ENCODE measurements at regions of chr15 and their contacts with region 1.

Region 1: DNA sequence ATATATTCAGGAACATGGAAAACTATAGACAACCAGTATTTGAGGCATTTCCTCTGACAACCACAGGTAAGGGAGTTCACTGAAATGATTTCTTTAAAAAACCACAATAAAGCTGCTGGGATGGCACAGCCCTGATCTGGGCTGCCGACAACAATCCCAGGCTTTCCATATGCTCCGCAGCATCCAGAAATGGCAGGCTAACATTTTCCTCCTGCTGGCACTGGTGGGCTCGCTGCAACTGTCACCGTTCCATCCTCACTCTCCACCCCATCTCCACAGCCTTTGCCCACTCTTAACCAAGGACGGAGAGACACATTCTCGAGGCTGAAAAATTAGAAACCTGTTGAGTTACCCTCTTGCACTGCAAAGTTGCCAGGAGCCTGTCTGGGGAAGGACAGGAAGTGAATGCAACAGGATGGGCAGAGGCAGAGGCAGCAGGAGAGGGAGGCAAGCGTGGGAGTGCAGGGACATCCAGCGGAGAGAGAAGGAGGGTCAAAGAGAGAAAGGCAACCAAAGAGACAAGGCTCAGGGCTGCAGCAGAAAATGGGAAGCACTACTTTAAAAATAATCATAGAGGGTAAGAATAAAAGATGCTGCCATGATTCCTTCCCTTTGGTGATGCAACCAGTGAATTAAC is 79.0 kb upstream of the ARRDC4 start:
- DNase-seq: no peak
- ATAC-seq: no peak
- H3K4me3 ChIP-seq: no peak overlapping the region
- H3K27ac ChIP-seq: no peak overlapping the region
- H3K4me1 ChIP-seq: no peaks in the 10 kb centered on the region
- H3K27me3 ChIP-seq: no peaks in the 10 kb centered on the region
- CTCF ChIP-seq: no peak

Region 2: DNA sequence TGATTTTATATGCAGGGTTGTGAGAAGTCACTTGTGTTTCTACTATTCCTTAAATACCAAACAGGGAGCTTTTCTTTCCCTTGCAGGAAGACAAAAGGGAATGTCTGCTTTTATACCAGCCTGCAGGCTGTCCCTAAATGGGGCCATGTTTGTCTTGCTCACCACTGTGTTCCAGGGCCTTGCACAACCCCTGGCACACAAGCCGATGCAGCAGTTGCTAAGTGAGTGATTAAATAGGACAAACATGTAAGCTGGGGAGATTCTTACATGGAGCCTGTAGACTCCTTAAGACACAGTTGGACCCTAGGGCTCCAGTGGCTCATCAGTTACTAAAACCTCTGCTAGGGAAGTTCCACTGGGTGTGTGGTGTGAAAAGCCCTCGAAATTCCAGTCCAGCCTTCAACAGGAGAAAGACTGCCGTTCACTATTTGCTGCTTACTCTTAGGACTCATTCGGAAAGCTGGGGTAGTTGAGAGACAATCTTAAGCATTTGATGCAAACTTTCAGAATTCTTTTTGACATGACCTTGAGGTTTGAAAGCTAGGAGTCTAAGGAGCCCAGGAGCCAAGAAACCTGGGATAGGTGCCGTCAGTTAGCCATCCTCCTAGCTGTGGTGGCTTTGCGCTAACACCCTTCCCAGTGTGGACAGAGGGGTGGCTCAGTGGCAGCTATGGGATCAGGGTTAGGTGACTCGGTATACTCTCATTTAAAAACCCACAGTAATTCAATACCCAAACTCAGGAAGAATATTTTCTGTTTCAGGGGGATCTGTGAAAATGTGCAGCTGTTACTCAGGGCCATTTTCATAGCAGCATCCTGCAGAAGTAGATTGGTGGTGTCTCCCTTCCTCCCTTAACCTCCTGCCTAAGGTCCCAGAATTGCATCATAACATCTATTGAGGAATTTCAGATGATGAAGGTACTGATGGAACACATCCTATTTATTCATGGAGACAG is 1262.5 kb after region 1 on chr15:
- intact Hi-C with region 1: loop called in 1 of 10 experiments (anchors 5 kb)
- DNase-seq: peak in 1 of 2 donors; percentile 63
- ATAC-seq: peak in 7 of 8 donors; percentile 50 to 90 (median 59)
- H3K4me3 ChIP-seq: no peak overlapping the region
- H3K27ac ChIP-seq: peak overlapping the region in 4 of 10 donors; percentile 12 to 54 (median 16)
- H3K4me1 ChIP-seq: peaks cover 0 to 34% (median 18%) of the 10 kb centered on the region in 9 donors
- H3K27me3 ChIP-seq: no peaks in the 10 kb centered on the region
- CTCF ChIP-seq: no peak